Sciatic nerve (tissue), 2 donors: ENCODE measurements at regions of chr1 and their contacts with region 1.

Region 1: DNA sequence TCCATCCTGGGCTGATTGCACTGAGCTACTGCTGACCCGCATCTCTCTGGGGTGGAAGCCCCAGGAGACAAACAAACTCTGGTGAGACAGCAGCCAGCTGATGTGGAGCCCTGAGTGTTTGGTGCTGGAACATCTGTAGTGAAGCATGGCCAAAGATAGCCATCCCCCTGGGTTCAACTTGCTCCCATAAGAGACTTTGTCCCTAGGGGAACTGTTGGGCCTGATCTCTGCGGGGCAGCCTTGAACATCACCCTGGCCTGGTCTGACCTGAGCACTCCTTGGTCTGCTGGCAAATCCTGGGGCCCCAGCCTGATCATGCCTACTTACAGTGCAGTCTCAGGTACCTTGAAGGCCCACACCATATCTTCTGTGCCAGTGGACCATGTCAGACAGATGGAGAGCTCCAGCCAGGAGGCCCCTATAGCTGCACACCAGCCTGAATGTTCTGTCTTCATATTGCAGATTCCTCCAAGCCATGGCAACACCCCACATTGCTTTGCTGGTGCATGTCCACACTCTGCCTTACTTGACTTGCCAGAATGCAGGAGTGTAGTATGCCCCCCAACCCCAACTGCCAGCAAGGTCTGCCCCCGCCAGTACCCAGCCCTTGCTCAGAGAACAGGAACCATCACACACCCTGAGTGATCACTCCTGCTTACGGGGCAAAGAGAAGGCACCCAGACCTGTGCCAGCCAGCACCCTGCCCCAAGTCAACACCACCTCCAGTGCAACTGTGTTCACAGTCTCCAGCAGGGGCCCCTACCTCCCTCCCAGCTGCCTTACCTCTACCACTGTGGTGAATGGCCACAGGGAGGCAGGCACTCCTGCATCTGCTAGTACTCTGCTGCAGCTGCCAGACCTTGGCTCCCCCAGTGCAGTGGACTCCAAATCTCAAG is 690.5 kb upstream of the NR5A2 start:
- DNase-seq: no peak
- ATAC-seq: no peak

Region 2: DNA sequence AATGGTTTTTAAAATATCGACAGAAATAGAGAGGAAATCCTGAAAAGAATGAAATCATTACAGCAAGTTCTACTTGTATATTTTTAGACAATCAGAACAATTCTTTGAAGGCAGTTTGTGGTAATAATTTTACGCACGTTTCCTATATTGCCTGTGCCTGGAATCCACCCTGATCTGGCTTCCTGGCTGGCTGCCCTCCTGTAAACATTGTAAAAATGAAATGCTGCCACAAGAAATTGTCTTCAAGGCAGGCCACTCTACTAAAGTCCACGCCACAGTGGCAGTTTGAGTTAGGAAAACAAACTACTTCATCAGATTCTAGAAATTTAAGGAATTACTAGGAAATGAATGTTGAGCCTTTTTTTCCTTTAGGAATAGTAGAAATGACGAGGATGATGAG is 236.1 kb after region 1 on chr1:
- intact Hi-C with region 1: loop called (anchors 5 kb)
- DNase-seq: no peak
- ATAC-seq: no peak